ENCODE measurements at regions of chr12 and their contacts with region 1.

Region 1: GRCh38 chr12:89019408-89020120 is 332.7 kb downstream of the DUSP6 start:
- DNase-seq: peak; percentile 21 to 84
- ATAC-seq: peak; percentile 89 to 99 (median 96)
- H3K4me3 ChIP-seq: peak overlapping the region in 6 of 10 donors; percentile 25 to 45 (median 32)
- H3K27ac ChIP-seq: no peak overlapping the region
- H3K4me1 ChIP-seq: peaks cover 0 to 20% (median 10%) of the 10 kb centered on the region in 9 donors
- H3K27me3 ChIP-seq: peaks cover 0 to 4% (median 0%) of the 10 kb centered on the region in 7 donors
- CTCF ChIP-seq: peak; percentile 71 to 90 (median 84)

Region 2: DNA sequence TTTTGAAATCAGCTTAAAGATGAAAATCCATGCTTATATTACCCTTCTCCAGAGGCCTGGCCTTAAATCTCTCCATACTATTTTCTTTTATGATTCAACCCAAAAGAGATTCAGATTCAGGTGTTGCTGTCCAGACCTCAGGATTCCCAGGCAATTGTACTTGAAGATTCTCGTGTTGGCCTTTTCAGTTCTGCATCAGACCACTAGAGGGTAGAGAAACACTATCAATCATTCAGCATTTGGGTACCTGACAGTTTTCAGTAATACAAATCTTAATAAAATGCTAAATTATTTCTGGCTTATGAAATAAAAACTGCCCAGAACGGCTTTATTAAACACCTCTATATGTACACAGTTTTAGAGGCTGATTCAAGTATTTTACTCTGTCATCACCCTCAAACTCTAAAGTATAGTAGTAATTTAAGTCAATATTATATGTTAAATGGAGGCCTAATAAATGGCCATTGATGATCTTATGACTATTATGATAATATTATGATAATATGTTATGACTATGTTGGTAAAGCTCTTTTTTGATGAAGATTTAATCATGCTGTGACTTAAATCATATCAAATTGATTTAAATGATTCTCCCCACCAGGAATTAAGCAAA is 31.6 kb after region 1 on chr12:
- intact Hi-C with region 1: loop called in 2 of 10 experiments (anchors 2 kb)
- DNase-seq: peak in 1 of 2 donors; percentile 44
- ATAC-seq: peak in 6 of 8 donors; percentile 70 to 85 (median 79)
- H3K4me3 ChIP-seq: no peak overlapping the region
- H3K27ac ChIP-seq: no peak overlapping the region
- H3K4me1 ChIP-seq: peaks cover 0 to 7% (median 0%) of the 10 kb centered on the region in 9 donors
- H3K27me3 ChIP-seq: no peaks in the 10 kb centered on the region
- CTCF ChIP-seq: peak; percentile 83 to 97 (median 93)

Region 3: DNA sequence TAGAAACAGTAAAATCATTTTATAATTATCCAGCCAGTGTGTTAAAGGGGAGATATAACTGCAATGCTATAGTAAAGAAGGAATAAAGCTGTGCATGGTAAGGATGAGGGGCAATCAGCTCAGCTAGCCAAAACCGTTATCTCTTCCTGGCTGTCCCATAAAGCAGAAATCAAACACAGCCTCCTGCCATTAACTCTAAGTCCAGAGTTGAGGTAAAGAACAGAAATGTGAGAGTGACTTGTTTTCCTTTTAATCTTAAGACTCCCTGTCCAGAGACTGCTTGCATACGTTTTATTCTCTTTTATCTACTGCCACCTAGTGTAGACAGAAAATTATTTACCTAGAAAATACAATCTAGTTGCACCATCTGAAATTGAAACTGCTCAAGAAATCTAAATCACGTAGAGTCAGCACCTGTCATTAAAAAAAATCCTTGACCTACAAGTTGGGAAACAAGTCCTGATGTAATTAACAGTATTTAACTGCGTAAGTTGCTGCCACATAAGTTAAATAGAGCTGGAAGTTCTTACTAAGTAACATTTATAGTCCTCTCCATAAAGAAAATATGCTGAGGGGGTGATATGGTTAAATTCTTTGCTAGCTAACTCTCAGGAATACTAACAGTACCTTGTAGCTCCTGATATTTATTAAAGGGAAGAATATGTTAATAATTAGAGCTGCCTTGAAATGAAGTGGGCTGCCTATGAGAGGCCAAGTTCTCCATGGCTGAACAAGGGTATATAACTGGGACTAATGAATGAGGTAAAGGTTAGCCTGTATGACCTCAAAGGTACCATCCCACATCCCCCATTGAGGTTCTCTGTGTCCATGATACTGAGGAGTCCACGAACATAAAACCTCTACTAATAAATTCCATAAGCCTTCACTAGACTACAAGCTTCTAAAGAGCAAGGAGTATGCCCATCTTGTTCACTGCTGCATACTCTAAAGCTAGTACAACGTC is 442.4 kb after region 1 on chr12:
- intact Hi-C with region 1: loop called in 8 of 10 experiments (anchors 1 to 5 kb)
- DNase-seq: no peak
- ATAC-seq: peak; percentile 70 to 96 (median 91)
- H3K4me3 ChIP-seq: peak overlapping the region in 6 of 10 donors; percentile 8 to 34 (median 20)
- H3K27ac ChIP-seq: peak overlapping the region in 9 of 10 donors; percentile 5 to 66 (median 41)
- H3K4me1 ChIP-seq: peaks cover 0 to 19% (median 11%) of the 10 kb centered on the region in 9 donors
- H3K27me3 ChIP-seq: no peaks in the 10 kb centered on the region
- CTCF ChIP-seq: peak; percentile 43 to 74 (median 60)

Region 4: DNA sequence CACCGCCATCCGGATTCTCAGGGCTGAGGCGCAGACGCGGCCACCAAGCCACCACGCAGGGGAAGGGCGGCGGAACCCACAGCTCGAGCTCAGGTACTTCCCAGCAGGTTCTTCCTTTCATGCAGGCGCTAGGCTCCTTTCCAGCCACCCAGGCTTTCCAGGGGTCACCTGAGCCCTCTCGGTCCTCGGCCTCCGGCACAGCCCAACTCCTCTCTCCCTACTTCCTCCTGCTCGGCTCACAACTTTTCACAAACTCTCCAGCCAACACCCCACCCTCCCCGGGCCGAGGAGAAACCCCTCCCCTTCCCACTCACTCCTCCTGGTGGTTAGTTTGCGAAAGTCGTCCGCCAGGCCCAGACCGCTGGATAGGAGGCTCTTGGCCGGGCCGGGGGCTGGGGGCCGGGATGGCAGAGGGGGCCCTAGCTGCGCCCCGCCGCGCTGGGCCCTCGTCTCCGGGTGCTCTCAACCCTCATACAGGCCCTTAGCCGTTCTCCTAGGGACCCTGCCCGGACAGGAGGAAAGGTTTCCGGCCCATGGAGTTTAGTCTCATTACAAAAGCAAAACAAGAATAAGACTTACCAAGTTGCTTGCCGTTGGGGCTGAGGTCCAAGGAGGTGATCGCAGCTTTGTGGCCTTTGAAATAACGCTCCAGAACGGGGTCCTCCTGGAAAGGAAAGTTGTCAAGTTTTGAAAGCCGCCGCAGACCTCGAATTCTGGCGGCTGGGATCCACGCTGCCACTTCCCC is 505.1 kb after region 1 on chr12 and contains the start of gene GALNT4:
- intact Hi-C with region 1: loop called (anchors 1 to 10 kb)
- DNase-seq: peak; percentile 83 to 90
- ATAC-seq: peak; percentile 92 to 96 (median 94)
- H3K4me3 ChIP-seq: peak within 1 kb of the TSS; percentile 71 to 97 (median 92)
- H3K27ac ChIP-seq: peak within 1 kb of the TSS; percentile 82 to 95 (median 92)
- H3K4me1 ChIP-seq: peaks cover 2 to 55% (median 44%) of the 10 kb centered on the region in 9 donors
- H3K27me3 ChIP-seq: no peaks in the 10 kb centered on the region
- CTCF ChIP-seq: peak; percentile 54 to 81 (median 69)
- total RNA-seq, gene GALNT4: 1.4 to 3.8 (median 2.1) TPM

Region 5: GRCh38 chr12:89529738-89530137 is 510.2 kb after region 1 on chr12:
- intact Hi-C with region 1: loop called (anchors 1 to 10 kb)
- DNase-seq: no peak
- ATAC-seq: no peak
- H3K4me3 ChIP-seq: no peak overlapping the region
- H3K27ac ChIP-seq: no peak overlapping the region
- H3K4me1 ChIP-seq: peaks cover 0 to 20% (median 12%) of the 10 kb centered on the region in 9 donors
- H3K27me3 ChIP-seq: no peaks in the 10 kb centered on the region
- CTCF ChIP-seq: peak; percentile 44 to 84 (median 72)